MCF 10A (cell line): ENCODE measurements at regions of chr6 and their contacts with region 1.

Region 1: GRCh38 chr6:33271458-33272274 is at the starts of genes RPS18 and VPS52:
- DNase-seq: peak; percentile 99
- H3K4me3 Mint-ChIP-seq: peak within 1 kb of the TSS; percentile 99
- H3K27ac Mint-ChIP-seq: peak within 1 kb of the TSS; percentile 100
- H3K4me1 Mint-ChIP-seq: peaks cover 34% of the 10 kb centered on the region
- H3K27me3 Mint-ChIP-seq: no peaks in the 10 kb centered on the region
- CTCF ChIP-seq: no peak
- total RNA-seq, gene RPS18: 4,063 and 4,680 TPM in 2 replicates
- total RNA-seq, gene VPS52: 47.8 and 49.7 TPM in 2 replicates

Region 2: DNA sequence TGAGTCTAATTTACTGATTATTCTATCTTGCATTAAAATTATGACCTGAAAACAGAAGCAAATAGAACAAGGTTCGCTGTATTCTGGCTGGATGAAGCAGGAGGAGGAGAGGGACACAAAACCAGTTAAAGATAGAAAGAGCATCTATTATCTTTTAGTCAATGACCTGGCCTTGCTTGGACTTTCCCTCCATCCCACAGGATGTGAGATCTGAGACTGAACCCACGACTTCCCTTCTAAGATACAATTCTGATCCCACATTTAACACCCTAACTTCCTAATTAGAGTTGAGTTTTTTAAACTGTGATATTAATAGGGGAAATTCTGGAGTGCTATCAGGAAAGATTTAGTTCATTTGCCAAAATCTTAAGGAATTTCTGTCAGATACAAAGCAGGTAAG is 533.5 kb before region 1 on chr6:
- CTCF ChIA-PET with region 1: no interaction called
- POLR2A ChIA-PET with region 1: no interaction called
- intact Hi-C with region 1: no loop called
- DNase-seq: no peak
- H3K4me3 Mint-ChIP-seq: no peak overlapping the region
- H3K27ac Mint-ChIP-seq: no peak overlapping the region
- H3K4me1 Mint-ChIP-seq: no peaks in the 10 kb centered on the region
- H3K27me3 Mint-ChIP-seq: peaks cover 89% of the 10 kb centered on the region
- CTCF ChIP-seq: no peak

Region 3: DNA sequence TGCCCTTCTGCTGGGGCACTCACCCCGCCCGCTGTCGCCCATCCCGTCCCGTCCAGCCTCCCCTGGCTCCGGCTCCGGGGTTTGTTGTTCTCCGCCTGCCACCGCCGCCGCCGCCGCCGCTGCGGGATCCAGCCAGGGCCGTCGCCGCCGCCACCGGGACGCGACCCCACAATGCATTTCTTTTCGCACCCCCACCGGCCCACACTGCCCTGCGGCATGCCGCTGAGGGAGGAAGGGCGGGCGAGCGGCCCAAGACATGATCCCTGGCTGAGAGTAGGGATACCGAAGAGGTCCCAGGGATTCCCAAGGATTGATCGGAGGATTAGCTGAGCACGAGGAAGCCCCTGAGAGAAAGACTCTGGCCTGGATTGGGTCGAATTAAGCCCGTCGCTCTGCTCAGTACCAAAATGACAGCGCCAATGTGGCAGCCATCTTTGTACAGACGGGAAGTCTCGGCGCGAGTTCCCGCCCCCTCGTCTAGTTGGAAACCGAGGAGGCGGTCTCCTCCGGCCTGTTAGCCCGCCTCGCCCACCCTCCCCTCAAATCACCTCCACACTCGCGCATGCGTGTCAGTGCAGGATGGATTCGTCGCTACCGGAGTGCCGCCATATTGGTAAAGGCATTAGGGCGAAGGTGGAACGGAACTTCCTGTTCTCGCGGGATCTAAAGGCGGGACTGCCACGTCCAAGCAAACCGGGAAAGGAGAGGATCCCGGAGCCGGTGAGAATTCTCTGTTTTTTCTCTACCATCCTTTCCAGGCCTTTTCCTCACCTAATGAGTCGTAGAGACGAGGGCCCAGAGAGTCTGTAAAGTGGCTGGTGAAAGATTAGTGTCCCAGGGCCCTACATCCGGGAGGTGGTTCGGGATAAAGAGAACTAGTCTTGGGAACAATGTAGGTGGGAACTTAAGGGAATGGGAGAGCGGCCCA is 71.2 kb before region 1 on chr6 and contains the starts of genes RXRB and SLC39A7:
- CTCF ChIA-PET with region 1: no interaction called
- POLR2A ChIA-PET with region 1: interaction called, 12 read pairs
- intact Hi-C with region 1: no loop called
- DNase-seq: peak; percentile 99
- H3K4me3 Mint-ChIP-seq: peak within 1 kb of the TSS; percentile 98
- H3K27ac Mint-ChIP-seq: peak within 1 kb of the TSS; percentile 100
- H3K4me1 Mint-ChIP-seq: peaks cover 61% of the 10 kb centered on the region
- H3K27me3 Mint-ChIP-seq: no peaks in the 10 kb centered on the region
- CTCF ChIP-seq: no peak
- total RNA-seq, gene RXRB: 29.6 and 35.1 TPM in 2 replicates
- total RNA-seq, gene SLC39A7: 118 and 187 TPM in 2 replicates

Region 4: GRCh38 chr6:33288921-33289748 is 17.5 kb after region 1 on chr6 and contains the starts of genes PFDN6 and WDR46:
- CTCF ChIA-PET with region 1: interaction called, 18 read pairs
- POLR2A ChIA-PET with region 1: interaction called, 148 read pairs
- intact Hi-C with region 1: no loop called
- DNase-seq: peak; percentile 93
- H3K4me3 Mint-ChIP-seq: peak within 1 kb of the TSS; percentile 88
- H3K27ac Mint-ChIP-seq: peak within 1 kb of the TSS; percentile 89
- H3K4me1 Mint-ChIP-seq: peaks cover 24% of the 10 kb centered on the region
- H3K27me3 Mint-ChIP-seq: no peaks in the 10 kb centered on the region
- CTCF ChIP-seq: no peak
- total RNA-seq, gene PFDN6: 54.7 and 67.1 TPM in 2 replicates
- total RNA-seq, gene WDR46: 53.1 and 57.0 TPM in 2 replicates

Region 5: GRCh38 chr6:33317669-33318425 is 46.2 kb after region 1 on chr6 and contains the start of gene ZBTB22:
- CTCF ChIA-PET with region 1: no interaction called
- POLR2A ChIA-PET with region 1: interaction called, 22 read pairs
- intact Hi-C with region 1: no loop called
- DNase-seq: peak; percentile 100
- H3K4me3 Mint-ChIP-seq: peak within 1 kb of the TSS; percentile 81
- H3K27ac Mint-ChIP-seq: peak within 1 kb of the TSS; percentile 80
- H3K4me1 Mint-ChIP-seq: peaks cover 66% of the 10 kb centered on the region
- H3K27me3 Mint-ChIP-seq: no peaks in the 10 kb centered on the region
- CTCF ChIP-seq: no peak
- total RNA-seq, gene ZBTB22: 12.3 and 15.5 TPM in 2 replicates

Region 6: GRCh38 chr6:33417903-33418689 is 146.4 kb after region 1 on chr6 and contains the start of gene CUTA:
- CTCF ChIA-PET with region 1: no interaction called
- POLR2A ChIA-PET with region 1: interaction called, 10 read pairs
- intact Hi-C with region 1: no loop called
- DNase-seq: peak; percentile 99
- H3K4me3 Mint-ChIP-seq: peak within 1 kb of the TSS; percentile 94
- H3K27ac Mint-ChIP-seq: peak within 1 kb of the TSS; percentile 98
- H3K4me1 Mint-ChIP-seq: peaks cover 32% of the 10 kb centered on the region
- H3K27me3 Mint-ChIP-seq: no peaks in the 10 kb centered on the region
- CTCF ChIP-seq: peak; percentile 34
- total RNA-seq, gene CUTA: 212 and 231 TPM in 2 replicates